GM12878 (cell line): ENCODE measurements at regions of chr19 and their contacts with region 1.

Region 1: DNA sequence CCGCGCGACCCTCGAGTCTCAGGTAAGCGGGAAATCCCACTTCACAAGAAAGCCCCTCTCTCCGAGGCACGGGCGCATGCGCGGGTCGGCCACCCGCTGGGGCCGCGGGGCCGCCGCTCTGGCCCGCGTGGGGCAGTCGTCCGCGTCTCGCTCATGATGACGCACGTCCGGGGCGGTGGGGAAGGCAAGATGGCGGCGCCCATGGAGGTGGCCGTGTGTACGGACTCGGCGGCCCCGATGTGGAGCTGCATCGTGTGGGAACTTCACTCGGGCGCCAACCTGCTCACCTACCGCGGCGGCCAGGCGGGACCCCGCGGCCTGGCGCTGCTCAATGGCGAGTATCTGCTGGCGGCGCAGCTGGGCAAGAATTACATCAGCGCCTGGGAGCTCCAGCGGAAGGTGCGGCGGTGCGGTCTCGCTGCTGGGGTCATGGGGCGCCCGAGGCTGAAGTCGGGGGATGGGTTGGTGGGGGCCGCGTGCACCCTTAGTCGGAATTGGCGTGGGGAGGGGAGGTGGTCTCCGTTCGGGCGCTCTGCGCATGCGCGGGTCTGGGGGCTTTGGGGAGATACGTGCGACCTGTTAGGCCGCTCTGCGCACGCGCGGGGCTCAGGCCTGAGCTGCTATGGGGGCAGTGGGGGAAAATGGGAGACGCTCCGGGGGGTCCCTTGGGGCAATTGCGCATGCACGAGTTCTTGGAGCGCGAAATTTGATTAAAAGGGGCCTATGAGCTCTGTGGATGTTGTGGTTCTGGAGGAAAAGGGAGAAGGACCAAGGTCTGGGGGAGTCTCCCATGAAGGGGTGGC is at the start of gene WDR18:
- DNase-seq: peak; percentile 49
- ATAC-seq: peak; percentile 88
- H3K4me3 ChIP-seq: peak within 1 kb of the TSS; percentile 86
- H3K27ac ChIP-seq: peak within 1 kb of the TSS; percentile 92
- H3K4me1 ChIP-seq: peaks cover 19% of the 10 kb centered on the region
- H3K27me3 ChIP-seq: no peaks in the 10 kb centered on the region
- CTCF ChIP-seq: peak in 2 of 3 experiments; percentile 8 to 9; a peak in 1 of 6 replicates
- EP300 ChIP-seq: no peak
- POLR2A ChIP-seq: peak; percentile 90
- RAD21 ChIP-seq: no peak
- polyA plus RNA-seq, gene WDR18: 3.0 to 3.3 TPM

Region 2: GRCh38 chr19:771332-771785 is 213.0 kb before region 1 on chr19:
- CTCF ChIA-PET with region 1: interaction called, 6 read pairs
- POLR2A ChIA-PET with region 1: interaction called, 4 read pairs
- RAD21 ChIA-PET with region 1: interaction called, 11 read pairs
- SMC1A ChIA-PET with region 1: no interaction called
- in situ Hi-C with region 1: loop called (anchors 5 kb)
- intact Hi-C with region 1: no loop called
- DNase-seq: no peak
- ATAC-seq: peak; percentile 77
- H3K4me3 ChIP-seq: no peak overlapping the region
- H3K27ac ChIP-seq: no peak overlapping the region
- H3K4me1 ChIP-seq: no peaks in the 10 kb centered on the region
- H3K27me3 ChIP-seq: no peaks in the 10 kb centered on the region
- CTCF ChIP-seq: peak; percentile 39 to 57 (median 40); a peak in 5 of 6 replicates
- EP300 ChIP-seq: no peak
- POLR2A ChIP-seq: no peak
- RAD21 ChIP-seq: no peak

Region 3: DNA sequence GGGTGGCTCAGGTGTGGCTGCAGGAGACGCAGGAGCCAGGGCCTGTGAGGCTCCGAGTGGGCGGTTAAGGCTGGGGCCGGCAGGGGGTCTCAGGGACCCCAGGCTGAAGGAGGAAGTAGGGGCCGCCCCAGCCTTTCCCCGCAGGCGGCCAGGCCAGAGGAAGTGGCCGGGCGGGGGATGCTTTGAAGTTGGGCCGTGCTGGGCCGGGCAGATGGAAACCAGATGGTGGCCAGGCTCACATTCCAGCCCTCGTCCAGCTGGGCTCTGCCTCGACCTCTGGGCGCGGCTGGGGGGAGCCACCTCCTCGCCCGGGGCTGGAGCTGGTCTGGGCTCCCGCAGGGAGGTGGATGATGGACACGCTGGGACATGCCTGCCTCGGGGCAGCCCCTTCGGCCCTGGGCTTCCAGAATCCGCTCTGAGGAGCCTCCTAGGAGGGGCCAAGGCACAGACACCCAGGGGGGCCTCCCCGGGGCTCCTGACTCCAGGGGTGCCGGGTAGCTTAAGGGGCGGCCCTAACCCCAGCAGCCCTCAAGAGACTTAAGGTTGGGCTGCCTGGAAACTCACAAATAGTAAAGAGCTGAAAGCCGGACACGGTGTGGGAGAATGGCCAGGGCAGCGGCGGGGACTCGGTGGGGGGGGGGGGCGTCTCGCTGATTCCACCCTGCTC is 51.0 kb before region 1 on chr19:
- CTCF ChIA-PET with region 1: interaction called, 10 read pairs
- POLR2A ChIA-PET with region 1: interaction called, 5 read pairs
- RAD21 ChIA-PET with region 1: interaction called, 10 read pairs
- SMC1A ChIA-PET with region 1: interaction called, 8 read pairs
- in situ Hi-C with region 1: no loop called
- intact Hi-C with region 1: no loop called
- DNase-seq: no peak
- ATAC-seq: peak; percentile 64
- H3K4me3 ChIP-seq: peak overlapping the region; percentile 65
- H3K27ac ChIP-seq: peak overlapping the region; percentile 47
- H3K4me1 ChIP-seq: peaks cover 21% of the 10 kb centered on the region
- H3K27me3 ChIP-seq: no peaks in the 10 kb centered on the region
- CTCF ChIP-seq: no peak
- EP300 ChIP-seq: no peak
- POLR2A ChIP-seq: no peak; the same call in 1 of the 2 replicates
- RAD21 ChIP-seq: no peak

Region 4: DNA sequence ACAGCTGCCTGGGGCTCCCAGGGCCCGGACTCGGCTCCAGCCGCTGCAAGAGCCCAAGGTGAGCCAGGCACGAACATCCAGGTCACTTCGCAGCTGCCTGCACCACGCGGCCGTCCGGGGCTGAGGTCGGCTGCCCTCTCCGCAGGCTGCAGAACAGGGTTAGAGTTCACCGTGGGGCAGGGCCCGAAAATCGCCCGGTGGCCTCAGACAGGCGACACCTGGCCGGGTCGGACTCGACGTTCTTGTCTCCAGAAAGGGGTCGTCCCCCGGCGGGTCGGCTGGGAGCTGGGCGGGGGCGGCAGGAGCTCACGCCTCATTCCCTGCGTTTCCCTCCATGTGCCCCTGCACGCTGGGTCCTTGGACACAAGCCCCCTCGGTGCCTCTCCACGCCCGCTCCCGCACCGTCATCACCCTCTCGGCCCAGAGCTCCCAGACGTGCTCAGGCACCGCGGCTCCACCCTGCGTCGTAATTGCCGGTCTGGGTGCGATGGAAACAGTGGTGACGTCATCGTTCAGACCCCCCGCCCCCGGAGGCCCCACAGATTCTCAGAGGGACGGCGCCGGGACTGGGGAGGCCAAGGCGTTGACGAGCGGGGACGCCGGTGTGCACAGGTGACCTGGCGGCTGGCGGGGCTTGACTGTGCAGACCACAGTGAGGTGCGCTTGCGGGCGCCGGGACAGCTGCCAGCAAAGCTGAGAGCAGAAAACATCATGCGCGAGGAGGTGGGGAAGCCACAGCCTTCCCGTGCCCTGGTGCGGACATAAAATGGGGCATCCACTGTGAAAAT is 11.9 kb after region 1 on chr19:
- CTCF ChIA-PET with region 1: interaction called, 11 read pairs
- POLR2A ChIA-PET with region 1: interaction called, 5 read pairs
- RAD21 ChIA-PET with region 1: interaction called, 11 read pairs
- SMC1A ChIA-PET with region 1: no interaction called
- in situ Hi-C with region 1: no loop called
- intact Hi-C with region 1: no loop called
- DNase-seq: no peak
- ATAC-seq: peak; percentile 32
- H3K4me3 ChIP-seq: no peak overlapping the region
- H3K27ac ChIP-seq: no peak overlapping the region
- H3K4me1 ChIP-seq: no peaks in the 10 kb centered on the region; the same call in 1 of the 2 replicates
- H3K27me3 ChIP-seq: peaks cover 3% of the 10 kb centered on the region in 2 experiments; a peak in 3 of 4 replicates
- CTCF ChIP-seq: no peak
- EP300 ChIP-seq: no peak
- POLR2A ChIP-seq: peak; percentile 54; the same call in 1 of the 2 replicates
- RAD21 ChIP-seq: no peak